HAP-1 (cell line): ENCODE measurements at regions of chr11 and their contacts with region 1.

Region 1: DNA sequence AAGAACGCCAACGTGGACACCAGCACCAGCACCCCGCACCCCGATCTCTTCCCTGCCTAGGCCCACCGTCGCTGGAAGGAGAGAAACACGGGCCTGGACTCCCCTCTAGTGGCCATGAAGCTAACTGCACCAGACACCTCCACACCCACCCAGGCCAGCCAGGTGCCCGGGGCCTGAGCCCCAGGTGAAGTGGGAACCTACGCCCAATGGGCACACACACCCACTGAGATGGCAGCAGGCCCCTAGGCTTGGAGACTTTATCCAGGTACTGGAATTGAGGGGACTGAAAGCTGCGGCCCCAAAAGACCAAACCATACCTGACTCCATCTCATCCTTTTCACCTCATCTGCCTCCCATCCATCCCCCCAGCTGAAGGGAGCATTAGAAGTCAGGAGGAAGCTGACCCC is 81.0 kb downstream of the BUD13 start:
- DNase-seq: peak; percentile 23 to 81
- H3K4me3 ChIP-seq: no peak overlapping the region
- H3K4me1 ChIP-seq: no peaks in the 10 kb centered on the region
- H3K27me3 ChIP-seq: no peaks in the 10 kb centered on the region

Region 2: DNA sequence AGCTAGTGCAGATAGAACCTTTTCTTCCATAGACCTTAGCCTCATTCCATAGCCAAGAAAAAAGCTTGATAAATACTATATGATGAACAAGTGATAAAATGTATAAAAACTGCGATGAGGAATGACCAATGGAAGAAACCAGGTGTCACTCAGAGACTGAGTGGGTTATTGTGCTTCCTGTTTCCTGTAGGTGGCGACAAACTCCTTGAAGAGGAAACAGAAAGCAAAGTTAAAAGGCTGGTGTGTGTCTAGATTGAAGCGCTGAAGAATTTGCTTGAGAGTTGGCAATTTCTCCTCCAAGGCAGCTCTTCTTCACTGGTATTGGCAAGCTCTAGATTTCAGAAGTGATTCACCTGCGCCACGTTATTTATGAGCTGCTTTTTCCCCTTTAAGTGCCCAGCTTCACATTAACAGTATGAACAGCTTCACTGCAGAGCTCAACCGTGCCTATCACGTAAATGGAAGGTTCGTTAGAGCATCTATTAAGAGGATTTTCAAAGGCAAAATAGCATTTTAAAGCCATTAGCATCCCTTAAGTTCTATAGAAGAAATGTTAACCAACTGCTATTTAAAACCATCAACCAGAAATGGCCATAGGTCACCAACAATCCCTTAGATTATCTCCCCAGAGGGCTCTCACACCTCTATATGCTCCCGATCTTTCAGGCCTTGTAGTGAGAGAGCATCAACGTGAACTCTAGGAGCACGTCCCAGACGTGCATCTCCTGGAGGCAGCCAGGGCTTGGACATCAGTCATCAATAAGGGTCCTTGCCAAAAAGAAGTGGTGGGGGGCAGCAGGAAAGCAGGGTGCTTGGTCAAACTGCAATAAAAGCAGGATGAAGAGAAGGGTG is 1367.0 kb before region 1 on chr11:
- in situ Hi-C with region 1: loop called (anchors 25 kb)
- DNase-seq: peak; percentile 26 to 68
- H3K4me3 ChIP-seq: no peak overlapping the region
- H3K4me1 ChIP-seq: no peaks in the 10 kb centered on the region
- H3K27me3 ChIP-seq: peaks cover 6% of the 10 kb centered on the region; the same call in 1 of the 2 replicates

Region 3: DNA sequence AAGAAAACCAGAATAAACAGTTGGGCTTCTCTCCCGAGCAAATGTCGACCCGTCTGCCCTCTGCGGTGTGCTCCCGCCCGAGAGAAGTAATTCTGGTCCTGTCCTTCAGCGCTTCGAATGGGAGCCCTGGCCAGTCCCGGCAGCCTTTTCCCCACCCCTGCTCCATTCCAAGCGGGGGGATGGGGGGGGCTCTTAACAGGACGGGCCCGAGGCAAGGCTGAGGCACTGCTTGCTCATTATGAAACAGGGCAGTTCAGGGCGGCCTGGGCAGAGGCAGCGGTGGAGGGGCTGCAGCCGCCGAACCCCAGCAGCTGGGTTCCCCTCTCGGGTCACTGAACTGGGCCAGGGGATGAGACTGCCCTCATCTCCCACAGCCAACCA is 608.5 kb after region 1 on chr11:
- in situ Hi-C with region 1: no loop called
- DNase-seq: no peak
- H3K4me3 ChIP-seq: no peak overlapping the region
- H3K4me1 ChIP-seq: peaks cover 11% of the 10 kb centered on the region
- H3K27me3 ChIP-seq: no peaks in the 10 kb centered on the region